Right lobe of liver (tissue), 6 donors: ENCODE measurements at regions of chr6 and their contacts with region 1.

Region 1: GRCh38 chr6:108526739-108527174 is 34.0 kb upstream of the FOXO3 start:
- DNase-seq: no peak
- ATAC-seq: peak; percentile 72 to 79 (median 76)
- H3K4me3 ChIP-seq: no peak overlapping the region
- H3K27ac ChIP-seq: no peak overlapping the region
- H3K4me1 ChIP-seq: no peaks in the 10 kb centered on the region
- H3K27me3 ChIP-seq: no peaks in the 10 kb centered on the region
- CTCF ChIP-seq: peak; percentile 72 to 81 (median 80)
- POLR2A ChIP-seq: no peak

Region 2: DNA sequence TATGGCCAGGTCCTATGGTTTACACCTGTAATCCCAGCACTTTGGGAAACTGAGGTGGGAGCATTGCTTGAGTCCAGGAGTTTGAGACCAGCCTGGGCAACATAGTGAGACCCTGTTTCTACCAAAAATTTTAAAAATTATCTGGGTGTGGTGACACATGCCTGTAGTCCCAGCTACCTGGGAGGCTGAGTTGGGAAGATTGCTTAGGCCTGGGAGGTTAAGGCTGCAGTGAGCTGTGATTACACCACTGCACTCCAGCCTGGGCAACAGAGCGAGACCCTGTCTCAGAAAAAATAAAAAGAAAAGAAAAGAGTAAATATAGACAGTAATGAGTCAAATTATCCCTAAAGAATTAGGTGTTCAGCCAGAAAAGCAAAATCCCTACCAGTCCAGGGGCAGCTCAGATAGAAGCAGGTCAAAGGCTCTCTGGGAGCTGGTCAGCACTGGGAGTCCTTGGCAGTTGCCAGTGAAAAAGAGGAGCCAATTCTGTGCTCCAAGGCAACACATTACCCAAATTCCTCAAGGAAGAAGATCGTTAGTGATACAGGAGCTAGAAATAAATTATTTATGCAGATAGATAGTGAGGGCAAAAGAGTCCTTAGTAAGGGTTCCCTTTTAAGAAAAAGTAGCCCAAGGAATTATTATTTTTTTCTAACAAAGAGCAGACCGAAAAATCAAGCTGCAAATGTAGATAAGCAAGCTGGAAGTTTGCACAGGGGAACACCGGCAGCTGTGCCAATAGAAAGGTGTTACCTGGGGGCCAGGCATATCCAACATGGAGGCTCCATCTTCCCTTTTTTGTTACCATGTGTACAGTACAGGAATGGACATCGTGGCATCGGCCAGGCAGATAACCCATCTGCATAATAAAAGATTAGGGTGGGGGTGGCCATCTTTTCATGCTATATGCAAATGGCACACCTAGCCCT is 537.3 kb before region 1 on chr6:
- intact Hi-C with region 1: loop called in 1 of 2 experiments (anchors 10 kb)
- DNase-seq: no peak
- ATAC-seq: no peak
- H3K4me3 ChIP-seq: no peak overlapping the region
- H3K27ac ChIP-seq: no peak overlapping the region
- H3K4me1 ChIP-seq: no peaks in the 10 kb centered on the region
- H3K27me3 ChIP-seq: no peaks in the 10 kb centered on the region
- CTCF ChIP-seq: no peak
- POLR2A ChIP-seq: no peak

Region 3: GRCh38 chr6:108714101-108714765 is 187.5 kb after region 1 on chr6:
- intact Hi-C with region 1: no loop called
- DNase-seq: peak in 1 of 3 donors; percentile 60
- ATAC-seq: peak; percentile 83 to 93 (median 90)
- H3K4me3 ChIP-seq: no peak overlapping the region
- H3K27ac ChIP-seq: peak overlapping the region in 1 of 3 donors; percentile 30
- H3K4me1 ChIP-seq: peaks cover 0 to 24% (median 2%) of the 10 kb centered on the region in 4 donors
- H3K27me3 ChIP-seq: no peaks in the 10 kb centered on the region
- CTCF ChIP-seq: no peak
- POLR2A ChIP-seq: no peak